WTC11 (cell line): ENCODE measurements at regions of chr1 and their contacts with region 1.

Region 1: GRCh38 chr1:19273106-19273843 is 15.3 kb downstream of the AKR7A3 start:
- DNase-seq: no peak
- ATAC-seq: no peak
- H3K4me3 Mint-ChIP-seq: peak overlapping the region; percentile 18; the same call in 1 of the 2 replicates
- H3K27ac Mint-ChIP-seq: no peak overlapping the region
- H3K4me1 Mint-ChIP-seq: no peaks in the 10 kb centered on the region
- H3K27me3 Mint-ChIP-seq: peaks cover 35% of the 10 kb centered on the region
- CTCF ChIP-seq: no peak

Region 2: GRCh38 chr1:19287436-19288185 is 14.3 kb after region 1 on chr1:
- CTCF ChIA-PET with region 1: interaction called, 11 read pairs
- POLR2A ChIA-PET with region 1: no interaction called
- DNase-seq: no peak
- ATAC-seq: no peak
- H3K4me3 Mint-ChIP-seq: peak overlapping the region; percentile 60
- H3K27ac Mint-ChIP-seq: no peak overlapping the region
- H3K4me1 Mint-ChIP-seq: peaks cover 6% of the 10 kb centered on the region
- H3K27me3 Mint-ChIP-seq: peaks cover 38% of the 10 kb centered on the region
- CTCF ChIP-seq: no peak